ENCODE measurements at regions of chr1 and their contacts with region 1.

Region 1: DNA sequence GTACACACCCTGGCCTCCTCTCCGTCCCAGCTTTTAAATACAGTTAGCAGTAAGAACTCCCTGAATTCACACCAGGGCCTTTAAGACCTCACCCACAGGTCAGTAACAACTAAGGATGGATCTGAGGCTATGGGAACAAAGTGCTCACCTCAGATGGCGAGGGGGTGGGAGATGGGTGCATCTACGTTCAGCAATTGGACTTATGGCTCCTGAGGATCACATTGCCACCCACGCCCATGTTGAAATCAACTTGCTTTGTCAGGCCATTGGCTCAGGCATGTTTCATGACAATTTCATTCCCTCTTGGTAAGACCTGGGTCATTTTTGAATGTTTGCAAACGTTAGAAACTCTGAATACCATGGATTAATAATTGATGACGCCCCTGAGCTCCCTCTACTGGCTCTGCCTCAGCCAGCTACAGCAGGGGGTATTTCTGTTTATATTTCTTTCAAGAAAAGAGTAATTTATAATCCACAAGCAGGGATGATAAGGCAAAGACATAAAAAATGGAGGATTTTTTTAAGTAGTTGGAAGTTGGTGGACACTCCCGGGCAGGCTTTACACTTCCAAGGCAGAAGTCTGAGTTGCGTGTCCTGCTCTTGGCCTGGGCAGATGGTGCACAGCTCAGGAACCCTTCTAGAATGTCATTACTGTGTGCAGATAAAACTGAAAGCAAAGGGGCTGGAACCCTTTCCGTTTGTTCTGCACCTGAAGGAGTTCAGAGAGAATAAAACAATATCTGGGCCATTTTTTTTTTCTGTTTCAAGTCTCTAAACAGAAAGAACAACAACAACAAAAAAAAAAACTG is 13.7 kb upstream of the LBR start:
- DNase-seq: no peak
- H3K4me3 ChIP-seq: no peak overlapping the region
- H3K27ac ChIP-seq: no peak overlapping the region
- H3K4me1 ChIP-seq: peaks cover 0 to 5% (median under 1%) of the 10 kb centered on the region in 4 experiments; a peak in 1 of 7 replicates
- H3K27me3 ChIP-seq: no peaks in the 10 kb centered on the region; a peak in 1 of 7 replicates
- CTCF ChIP-seq: peak in 1 of 3 experiments; percentile 7; a peak in 1 of 4 replicates
- EP300 ChIP-seq: no peak
- POLR2A ChIP-seq: no peak
- RAD21 ChIP-seq: no peak

Region 2: DNA sequence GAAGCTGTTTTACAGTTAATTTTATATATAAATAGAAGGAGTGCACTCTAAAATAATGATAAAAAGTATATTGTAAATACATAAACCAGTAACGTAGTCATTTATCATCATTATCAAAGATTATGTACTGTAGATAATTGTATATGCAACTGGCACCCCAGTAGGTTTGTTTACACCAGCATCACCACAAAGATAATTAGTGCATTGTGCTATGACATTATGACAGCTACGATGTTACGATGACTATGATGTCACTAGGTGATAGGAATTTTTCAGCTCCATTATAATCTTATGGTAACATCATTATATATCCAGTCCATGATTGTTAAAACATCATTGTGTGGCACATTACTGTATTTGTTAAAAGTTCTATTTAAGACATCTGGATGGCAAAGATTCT is 198.9 kb before region 1 on chr1:
- CTCF ChIA-PET with region 1: no interaction called
- POLR2A ChIA-PET with region 1: no interaction called
- DNase-seq: no peak
- H3K4me3 ChIP-seq: no peak overlapping the region
- H3K27ac ChIP-seq: no peak overlapping the region
- H3K4me1 ChIP-seq: no peaks in the 10 kb centered on the region
- H3K27me3 ChIP-seq: no peaks in the 10 kb centered on the region
- CTCF ChIP-seq: no peak
- EP300 ChIP-seq: no peak
- POLR2A ChIP-seq: no peak
- RAD21 ChIP-seq: no peak

Region 3: GRCh38 chr1:225428068-225428880 is 13.2 kb before region 1 on chr1:
- CTCF ChIA-PET with region 1: interaction called, 16 read pairs
- POLR2A ChIA-PET with region 1: interaction called, 4 read pairs
- DNase-seq: peak; percentile 54 to 92
- H3K4me3 ChIP-seq: peak overlapping the region; percentile 63 to 91 (median 84)
- H3K27ac ChIP-seq: peak overlapping the region; percentile 70; the same call in 1 of the 2 replicates
- H3K4me1 ChIP-seq: peaks cover 3 to 13% (median 12%) of the 10 kb centered on the region in 4 experiments
- H3K27me3 ChIP-seq: peaks cover 0 to 3% (median 1%) of the 10 kb centered on the region in 4 experiments; a peak in 2 of 7 replicates
- CTCF ChIP-seq: no peak
- EP300 ChIP-seq: no peak
- POLR2A ChIP-seq: peak; percentile 65 to 76
- RAD21 ChIP-seq: no peak

Region 4: DNA sequence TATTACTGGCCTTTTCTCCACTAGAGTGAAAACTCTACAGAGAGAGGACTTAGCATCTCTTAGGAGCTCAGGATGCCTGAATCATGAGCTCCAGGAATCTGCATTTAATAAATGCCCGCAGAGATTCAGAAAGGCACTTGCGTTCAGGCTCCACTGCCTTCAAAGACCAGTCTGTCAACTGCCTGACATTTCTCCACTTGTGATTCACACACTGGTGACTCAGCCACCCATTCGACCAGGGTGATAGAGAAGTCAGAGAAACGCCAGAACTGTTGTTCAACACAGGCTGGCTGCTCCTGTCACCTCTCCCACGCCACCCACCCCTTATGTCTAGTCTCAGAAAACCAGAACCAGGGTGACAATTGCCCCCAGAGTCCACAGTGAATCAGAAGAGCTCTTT is 13.2 kb after region 1 on chr1:
- CTCF ChIA-PET with region 1: interaction called, 17 read pairs
- POLR2A ChIA-PET with region 1: interaction called, 4 read pairs
- DNase-seq: no peak
- H3K4me3 ChIP-seq: no peak overlapping the region
- H3K27ac ChIP-seq: no peak overlapping the region
- H3K4me1 ChIP-seq: no peaks in the 10 kb centered on the region; a peak in 1 of 7 replicates
- H3K27me3 ChIP-seq: no peaks in the 10 kb centered on the region
- CTCF ChIP-seq: no peak
- EP300 ChIP-seq: no peak
- POLR2A ChIP-seq: no peak
- RAD21 ChIP-seq: no peak

Region 5: GRCh38 chr1:225572422-225572821 is 130.9 kb after region 1 on chr1:
- CTCF ChIA-PET with region 1: no interaction called
- POLR2A ChIA-PET with region 1: no interaction called
- DNase-seq: no peak
- H3K4me3 ChIP-seq: no peak overlapping the region
- H3K27ac ChIP-seq: no peak overlapping the region
- H3K4me1 ChIP-seq: peaks cover 0 to 10% (median 3%) of the 10 kb centered on the region in 4 experiments; a peak in 5 of 7 replicates
- H3K27me3 ChIP-seq: no peaks in the 10 kb centered on the region
- CTCF ChIP-seq: no peak
- EP300 ChIP-seq: no peak
- POLR2A ChIP-seq: no peak
- RAD21 ChIP-seq: no peak; a peak in 1 of 4 replicates

Region 6: DNA sequence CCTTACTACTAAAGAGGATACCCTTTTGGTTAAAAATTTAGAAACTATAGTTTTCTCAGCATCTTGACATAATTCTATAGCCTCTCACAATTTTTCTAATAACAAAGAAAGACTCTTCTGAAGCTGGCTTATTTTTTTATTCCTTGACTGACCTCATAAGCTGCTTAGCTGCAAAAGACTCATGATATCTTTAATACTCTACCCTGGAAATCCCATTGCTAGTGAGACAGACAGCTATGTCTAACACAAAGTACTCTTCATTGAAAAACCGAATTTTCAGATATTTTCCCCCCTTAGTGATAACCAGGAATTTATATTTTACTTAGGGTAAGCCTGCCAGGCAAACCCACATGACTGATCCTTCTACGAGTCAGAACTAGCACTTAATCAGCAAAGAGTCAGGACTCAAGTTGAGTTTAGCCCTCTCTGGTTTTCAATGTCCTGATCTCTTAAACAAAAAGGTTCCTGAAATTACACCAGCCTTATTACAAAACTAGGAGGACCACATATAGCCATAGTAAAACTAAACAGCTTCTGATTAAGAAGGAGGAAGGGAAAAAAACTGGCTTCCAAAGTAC is 154.5 kb after region 1 on chr1:
- CTCF ChIA-PET with region 1: no interaction called
- POLR2A ChIA-PET with region 1: no interaction called
- DNase-seq: no peak
- H3K4me3 ChIP-seq: no peak overlapping the region
- H3K27ac ChIP-seq: no peak overlapping the region
- H3K4me1 ChIP-seq: peaks cover 0 to 4% (median 1%) of the 10 kb centered on the region in 4 experiments; a peak in 3 of 7 replicates
- H3K27me3 ChIP-seq: no peaks in the 10 kb centered on the region
- CTCF ChIP-seq: no peak
- EP300 ChIP-seq: no peak
- POLR2A ChIP-seq: no peak
- RAD21 ChIP-seq: no peak

Region 7: DNA sequence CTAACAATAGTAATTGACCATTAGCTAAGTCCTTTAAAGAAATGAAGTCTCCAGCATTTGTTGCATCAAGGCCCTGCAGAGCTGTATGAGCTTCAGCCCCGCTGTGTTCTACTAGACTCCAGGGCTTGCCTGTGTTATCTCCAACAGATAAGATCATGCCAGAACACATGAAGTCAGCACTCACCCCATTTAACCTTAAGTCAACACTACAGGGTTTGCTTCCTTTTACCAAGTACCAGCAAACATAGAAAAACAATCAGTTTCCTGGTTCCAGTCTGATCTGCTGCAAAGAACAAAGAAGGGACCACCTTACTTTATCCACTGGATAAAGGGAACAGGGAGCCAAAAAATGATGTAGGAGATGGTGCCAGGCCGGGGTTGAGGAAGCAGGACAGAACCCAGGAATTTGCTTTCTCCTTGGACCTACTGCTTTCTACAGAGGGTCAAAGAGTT is 252.7 kb after region 1 on chr1:
- CTCF ChIA-PET with region 1: no interaction called
- POLR2A ChIA-PET with region 1: no interaction called
- DNase-seq: no peak
- H3K4me3 ChIP-seq: no peak overlapping the region
- H3K27ac ChIP-seq: no peak overlapping the region
- H3K4me1 ChIP-seq: no peaks in the 10 kb centered on the region
- H3K27me3 ChIP-seq: no peaks in the 10 kb centered on the region
- CTCF ChIP-seq: no peak
- EP300 ChIP-seq: no peak
- POLR2A ChIP-seq: no peak
- RAD21 ChIP-seq: no peak

Measured in H1 (cell line).